ENCODE measurements at regions of chr7 and their contacts with region 1.

Region 1: GRCh38 chr7:992709-993607 is 10.0 kb downstream of the CYP2W1 start:
- DNase-seq: peak; percentile 91 to 98 (median 94)
- ATAC-seq: peak; percentile 100
- H3K4me3 ChIP-seq: no peak overlapping the region
- H3K4me3 Mint-ChIP-seq: no peak overlapping the region
- H3K27ac ChIP-seq: no peak overlapping the region
- H3K27ac Mint-ChIP-seq: no peak overlapping the region
- H3K4me1 ChIP-seq: peaks cover 12% of the 10 kb centered on the region
- H3K4me1 Mint-ChIP-seq: peaks cover 6% of the 10 kb centered on the region
- H3K27me3 ChIP-seq: peaks cover 3 to 6% of the 10 kb centered on the region in 2 experiments
- H3K27me3 Mint-ChIP-seq: no peaks in the 10 kb centered on the region
- CTCF ChIP-seq: peak; percentile 100

Region 2: GRCh38 chr7:974820-975681 is 17.9 kb before region 1 on chr7 and contains the start of gene COX19:
- CTCF ChIA-PET with region 1: interaction called, 57 read pairs
- POLR2A ChIA-PET with region 1: interaction called, 7 read pairs
- intact Hi-C with region 1: no loop called
- DNase-seq: peak; percentile 85 to 95 (median 88)
- ATAC-seq: peak; percentile 89
- H3K4me3 ChIP-seq: peak within 1 kb of the TSS; percentile 87
- H3K4me3 Mint-ChIP-seq: peak within 1 kb of the TSS; percentile 91
- H3K27ac ChIP-seq: peak within 1 kb of the TSS; percentile 95 to 97
- H3K27ac Mint-ChIP-seq: peak within 1 kb of the TSS; percentile 94
- H3K4me1 ChIP-seq: peaks cover 26% of the 10 kb centered on the region
- H3K4me1 Mint-ChIP-seq: peaks cover 17% of the 10 kb centered on the region
- H3K27me3 ChIP-seq: no peaks in the 10 kb centered on the region
- H3K27me3 Mint-ChIP-seq: no peaks in the 10 kb centered on the region
- CTCF ChIP-seq: no peak
- total RNA-seq, gene COX19: 47.7 to 51.8 TPM

Region 3: DNA sequence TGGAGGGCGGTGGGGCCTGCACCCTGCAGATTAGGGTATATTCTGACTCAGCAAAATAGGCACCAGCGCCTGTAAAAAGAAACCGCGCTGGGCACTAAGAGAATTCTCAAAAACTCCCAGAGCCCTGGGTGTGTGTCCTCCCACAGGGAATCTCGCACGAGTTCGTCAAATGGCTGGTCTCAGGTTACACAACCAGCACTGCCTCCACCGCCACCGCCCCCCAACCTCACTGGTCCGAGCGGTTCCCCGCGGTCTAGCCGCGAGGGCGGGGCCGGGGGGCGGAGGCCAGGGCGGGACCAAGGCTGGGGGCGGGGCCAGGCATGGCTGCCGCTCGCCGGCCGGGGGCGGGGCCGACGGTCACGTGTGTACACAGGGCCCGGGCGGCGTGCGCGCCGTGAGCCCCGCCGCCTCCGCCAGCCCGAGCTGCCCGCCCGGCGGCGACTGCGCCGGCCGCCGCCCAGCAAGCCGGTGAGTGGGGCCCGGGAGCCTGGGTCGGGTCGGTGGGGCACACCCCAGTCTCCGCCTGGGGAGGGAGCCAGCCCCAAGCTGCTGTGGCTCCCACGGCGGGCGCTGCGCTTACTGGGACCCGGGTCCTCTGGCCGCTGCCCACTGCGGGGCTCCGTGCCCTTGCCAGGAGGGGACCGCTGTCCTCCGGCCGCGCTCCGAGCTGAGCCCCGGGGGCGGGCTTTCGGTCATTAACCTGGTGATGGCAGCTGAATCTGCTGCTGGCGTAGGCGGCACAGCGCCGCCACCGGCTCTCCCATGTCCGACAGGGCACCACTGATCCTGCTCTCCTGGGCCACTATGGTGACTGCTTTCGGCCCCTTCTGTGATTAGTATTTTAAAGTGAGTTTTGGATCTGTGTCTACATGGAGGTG is 51.5 kb after region 1 on chr7 and contains the start of gene GPR146:
- CTCF ChIA-PET with region 1: interaction called, 73 read pairs
- POLR2A ChIA-PET with region 1: interaction called, 6 read pairs
- intact Hi-C with region 1: no loop called
- DNase-seq: peak; percentile 82 to 95 (median 90)
- ATAC-seq: peak; percentile 80
- H3K4me3 ChIP-seq: peak within 1 kb of the TSS; percentile 50
- H3K4me3 Mint-ChIP-seq: peak within 1 kb of the TSS; percentile 91
- H3K27ac ChIP-seq: peak within 1 kb of the TSS in 1 of 2 donors; percentile 56
- H3K27ac Mint-ChIP-seq: peak within 1 kb of the TSS; percentile 79
- H3K4me1 ChIP-seq: peaks cover 67% of the 10 kb centered on the region
- H3K4me1 Mint-ChIP-seq: peaks cover 60% of the 10 kb centered on the region
- H3K27me3 ChIP-seq: no peaks in the 10 kb centered on the region
- H3K27me3 Mint-ChIP-seq: no peaks in the 10 kb centered on the region
- CTCF ChIP-seq: peak; percentile 66
- total RNA-seq, gene GPR146: 9.9 to 13.7 TPM

Region 4: GRCh38 chr7:1065263-1066260 is 72.6 kb after region 1 on chr7:
- CTCF ChIA-PET with region 1: interaction called, 220 read pairs
- POLR2A ChIA-PET with region 1: interaction called, 38 read pairs
- intact Hi-C with region 1: loop called in 1 of 2 experiments (anchors 1 kb)
- DNase-seq: peak; percentile 73 to 90 (median 82)
- ATAC-seq: peak; percentile 97
- H3K4me3 ChIP-seq: peak overlapping the region; percentile 42
- H3K4me3 Mint-ChIP-seq: peak overlapping the region; percentile 66
- H3K27ac ChIP-seq: no peak overlapping the region
- H3K27ac Mint-ChIP-seq: no peak overlapping the region
- H3K4me1 ChIP-seq: peaks cover 18% of the 10 kb centered on the region
- H3K4me1 Mint-ChIP-seq: peaks cover 20% of the 10 kb centered on the region
- H3K27me3 ChIP-seq: peaks cover 0 to 4% of the 10 kb centered on the region in 2 experiments
- H3K27me3 Mint-ChIP-seq: no peaks in the 10 kb centered on the region
- CTCF ChIP-seq: peak; percentile 97

Region 5: DNA sequence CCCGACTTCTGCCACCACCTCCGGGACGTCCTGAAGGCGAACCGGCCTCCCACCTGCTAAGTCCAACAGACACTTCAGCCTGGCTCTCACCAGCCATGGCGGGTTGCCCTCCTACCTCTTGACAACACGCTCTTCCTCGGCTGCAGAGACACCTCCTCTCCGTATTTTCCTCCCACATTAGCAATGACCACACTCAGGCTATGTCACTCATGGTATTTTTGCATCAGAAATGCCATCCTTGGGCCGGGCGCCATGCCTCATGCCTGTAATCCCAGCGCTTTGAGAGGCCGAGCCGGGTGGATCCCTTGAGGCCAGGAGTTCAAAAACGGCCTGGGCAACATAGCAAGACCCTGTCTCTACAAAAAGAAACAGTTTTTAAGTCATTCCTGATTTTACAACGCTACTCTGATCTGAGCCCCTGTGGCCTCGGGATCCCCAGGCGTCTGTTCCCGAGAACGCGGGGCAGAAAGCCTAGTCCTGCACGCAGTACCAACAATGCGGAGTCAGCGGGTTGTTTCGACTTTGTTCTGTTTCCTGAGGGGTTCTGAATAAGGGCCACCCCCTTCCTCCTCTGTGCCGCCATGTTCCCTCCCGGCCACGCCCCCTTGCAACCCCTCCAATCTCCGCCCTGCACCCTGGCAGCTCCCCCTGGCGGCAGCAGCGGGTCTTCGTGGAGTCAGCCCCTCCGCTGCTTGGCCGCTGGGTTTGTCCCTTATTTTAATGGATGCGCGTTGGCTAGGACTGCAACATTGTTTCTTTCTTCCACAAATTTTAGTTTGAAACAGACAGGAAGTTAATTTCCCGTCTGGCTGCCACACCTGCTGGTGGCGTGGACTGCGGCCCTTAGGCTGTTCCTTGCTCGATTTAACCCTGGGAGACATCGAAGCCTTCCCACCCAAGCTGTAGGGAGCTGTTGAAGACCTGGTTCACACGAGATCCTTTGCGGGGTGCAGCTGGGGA is 176.7 kb after region 1 on chr7:
- CTCF ChIA-PET with region 1: interaction called, 3 read pairs
- POLR2A ChIA-PET with region 1: no interaction called
- intact Hi-C with region 1: loop called in 1 of 2 experiments (anchors 1 kb)
- DNase-seq: peak; percentile 52 to 96 (median 91)
- ATAC-seq: peak; percentile 100
- H3K4me3 ChIP-seq: peak overlapping the region; percentile 39
- H3K4me3 Mint-ChIP-seq: peak overlapping the region; percentile 87
- H3K27ac ChIP-seq: no peak overlapping the region
- H3K27ac Mint-ChIP-seq: peak overlapping the region; percentile 85
- H3K4me1 ChIP-seq: peaks cover 18% of the 10 kb centered on the region
- H3K4me1 Mint-ChIP-seq: peaks cover 11% of the 10 kb centered on the region
- H3K27me3 ChIP-seq: no peaks in the 10 kb centered on the region
- H3K27me3 Mint-ChIP-seq: no peaks in the 10 kb centered on the region
- CTCF ChIP-seq: peak; percentile 91